CD4-positive, alpha-beta memory T cell (primary cell): ENCODE measurements at regions of chr5 and their contacts with region 1.

Region 1: DNA sequence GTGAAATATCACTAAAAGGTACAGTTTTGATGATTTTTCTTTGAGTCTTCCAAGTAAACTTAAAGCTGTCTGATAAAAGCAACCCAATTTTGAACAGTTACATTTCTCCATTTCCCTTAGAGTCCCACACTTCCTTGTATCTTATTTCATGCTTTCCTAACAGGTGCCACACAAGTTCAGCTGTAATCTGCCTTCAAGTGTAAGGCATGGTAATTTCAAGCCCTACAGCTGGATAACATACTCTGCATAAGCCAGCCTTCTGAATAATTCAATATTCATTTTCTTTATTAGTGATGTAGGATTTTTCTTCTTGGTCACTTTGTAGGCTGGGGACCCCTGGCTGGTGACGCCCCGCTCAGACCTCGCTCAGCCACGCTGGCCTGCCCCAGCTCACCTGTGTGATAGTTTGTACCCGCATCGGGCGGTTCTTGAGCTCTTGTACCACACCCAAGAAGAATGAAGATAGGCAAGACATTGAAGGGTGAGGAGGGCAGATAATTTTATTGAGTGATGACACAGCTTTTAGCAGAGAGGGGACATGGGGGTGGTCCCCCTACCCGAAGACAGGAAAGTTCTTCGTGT is 34.0 kb downstream of the SOX30 start:
- DNase-seq: no peak
- H3K4me3 ChIP-seq: no peak overlapping the region
- H3K4me3 Mint-ChIP-seq: no peak overlapping the region
- H3K27ac ChIP-seq: no peak overlapping the region
- H3K27ac Mint-ChIP-seq: peak overlapping the region in 1 of 7 donors; percentile 5
- H3K4me1 ChIP-seq: peaks cover 14% of the 10 kb centered on the region
- H3K4me1 Mint-ChIP-seq: peaks cover 12 to 17% (median 12%) of the 10 kb centered on the region in 4 donors
- H3K27me3 ChIP-seq: no peaks in the 10 kb centered on the region
- H3K27me3 Mint-ChIP-seq: no peaks in the 10 kb centered on the region

Region 2: GRCh38 chr5:157549954-157550549 is 68.2 kb before region 1 on chr5:
- CTCF ChIA-PET with region 1: no interaction called
- POLR2A ChIA-PET with region 1: no interaction called
- intact Hi-C with region 1: no loop called
- DNase-seq: no peak
- H3K4me3 ChIP-seq: no peak overlapping the region
- H3K4me3 Mint-ChIP-seq: peak overlapping the region; percentile 17 to 91 (median 78)
- H3K27ac ChIP-seq: peak overlapping the region; percentile 44
- H3K27ac Mint-ChIP-seq: peak overlapping the region; percentile 93 to 98 (median 96)
- H3K4me1 ChIP-seq: peaks cover 100% of the 10 kb centered on the region
- H3K4me1 Mint-ChIP-seq: peaks cover 78 to 93% (median 86%) of the 10 kb centered on the region in 4 donors
- H3K27me3 ChIP-seq: no peaks in the 10 kb centered on the region
- H3K27me3 Mint-ChIP-seq: no peaks in the 10 kb centered on the region

Region 3: DNA sequence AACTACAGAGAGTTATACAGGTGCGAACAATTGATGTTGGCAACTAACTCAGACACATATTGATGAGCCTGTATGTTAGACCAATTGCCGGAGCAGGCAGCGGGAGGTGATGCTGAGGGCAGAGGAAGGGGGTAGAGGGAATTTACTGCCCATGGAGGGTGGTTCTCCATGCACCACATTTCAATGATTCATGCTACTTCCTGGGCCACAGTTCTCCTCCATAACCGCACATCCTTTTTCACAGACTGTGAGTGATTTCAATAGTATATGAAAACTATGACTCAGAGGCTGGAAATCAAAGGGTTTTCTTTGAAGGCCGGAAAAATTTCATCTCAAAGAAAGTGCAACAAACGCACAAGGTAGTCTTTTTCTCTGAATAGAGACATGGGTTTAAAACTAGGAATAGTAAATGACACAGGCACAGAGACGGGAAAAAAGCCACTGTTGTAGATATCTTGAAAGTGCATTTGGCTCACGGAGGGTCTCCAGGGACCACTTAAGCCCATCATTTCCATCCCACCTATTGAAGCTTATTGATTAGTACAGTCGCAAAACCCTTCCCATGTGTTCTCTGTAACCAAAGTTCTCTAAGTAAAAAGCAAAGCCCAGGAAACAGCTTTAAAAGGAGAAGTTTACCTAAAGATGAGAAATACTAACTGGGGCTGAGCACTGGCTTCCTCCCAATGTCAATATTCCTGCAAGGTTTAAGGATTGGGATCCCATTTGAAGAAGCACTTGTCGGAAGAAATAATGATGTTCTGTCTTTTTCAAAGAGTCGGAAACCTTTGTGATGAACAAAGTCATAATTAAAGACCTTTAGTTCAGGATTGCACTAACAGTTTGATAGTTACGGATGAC is 14.7 kb before region 1 on chr5:
- CTCF ChIA-PET with region 1: interaction called, 5 read pairs
- POLR2A ChIA-PET with region 1: interaction called, 13 read pairs
- intact Hi-C with region 1: no loop called
- DNase-seq: peak; percentile 72 to 93 (median 75)
- H3K4me3 ChIP-seq: no peak overlapping the region
- H3K4me3 Mint-ChIP-seq: peak overlapping the region; percentile 39 to 84 (median 70)
- H3K27ac ChIP-seq: peak overlapping the region; percentile 68
- H3K27ac Mint-ChIP-seq: peak overlapping the region; percentile 84 to 96 (median 86)
- H3K4me1 ChIP-seq: peaks cover 90% of the 10 kb centered on the region
- H3K4me1 Mint-ChIP-seq: peaks cover 45 to 69% (median 60%) of the 10 kb centered on the region in 4 donors
- H3K27me3 ChIP-seq: no peaks in the 10 kb centered on the region
- H3K27me3 Mint-ChIP-seq: no peaks in the 10 kb centered on the region

Region 4: DNA sequence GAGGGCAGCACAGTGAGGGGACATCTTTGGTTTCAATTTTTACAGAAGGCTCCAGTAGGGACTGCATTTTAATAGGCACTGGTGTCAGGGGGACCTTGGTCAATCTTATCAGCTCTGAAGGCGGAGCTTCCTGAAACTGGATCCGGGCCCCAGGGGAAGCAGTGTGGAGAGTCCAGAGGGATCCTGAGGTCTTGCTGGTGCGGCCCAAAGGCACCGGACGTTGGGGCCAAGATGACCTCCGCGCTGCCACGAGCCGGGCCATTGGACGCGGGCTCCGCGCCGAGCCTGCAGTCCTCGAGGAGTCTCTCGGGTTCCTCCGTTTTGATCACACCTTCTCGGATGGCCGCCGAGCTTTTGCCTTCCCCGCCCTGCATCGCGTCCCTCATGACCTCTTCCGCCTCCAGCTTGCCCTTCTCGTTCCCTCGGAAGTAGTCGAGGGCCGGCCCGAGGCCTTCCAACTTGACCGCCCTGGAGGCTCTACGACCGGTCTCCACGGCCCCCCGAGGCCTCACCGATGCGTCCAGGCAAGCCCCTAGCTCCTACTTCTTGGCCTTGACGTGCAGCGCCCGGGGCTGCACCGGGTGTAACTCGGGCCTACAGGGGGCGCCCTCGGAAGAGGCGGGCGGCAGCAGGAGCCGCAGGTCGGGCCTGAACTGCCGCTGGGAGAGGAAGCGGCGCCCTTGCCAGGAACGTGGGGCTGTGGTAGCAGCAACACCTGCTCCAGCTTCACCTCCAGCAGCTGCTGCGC is 71.8 kb after region 1 on chr5:
- CTCF ChIA-PET with region 1: no interaction called
- POLR2A ChIA-PET with region 1: no interaction called
- intact Hi-C with region 1: no loop called
- DNase-seq: peak in 2 of 5 donors; percentile 7 to 29
- H3K4me3 ChIP-seq: no peak overlapping the region
- H3K4me3 Mint-ChIP-seq: no peak overlapping the region
- H3K27ac ChIP-seq: no peak overlapping the region
- H3K27ac Mint-ChIP-seq: no peak overlapping the region
- H3K4me1 ChIP-seq: no peaks in the 10 kb centered on the region
- H3K4me1 Mint-ChIP-seq: no peaks in the 10 kb centered on the region
- H3K27me3 ChIP-seq: no peaks in the 10 kb centered on the region
- H3K27me3 Mint-ChIP-seq: no peaks in the 10 kb centered on the region